ENCODE measurements at regions of chr2 and their contacts with region 1.

Region 1: GRCh38 chr2:73985308-73986084 is 786 bp downstream of the TET3 start:
- DNase-seq: no peak
- ATAC-seq: peak; percentile 16
- H3K4me3 ChIP-seq: peak overlapping the region; percentile 96
- H3K27ac ChIP-seq: peak overlapping the region; percentile 89
- H3K4me1 ChIP-seq: peaks cover 12% of the 10 kb centered on the region
- H3K27me3 ChIP-seq: no peaks in the 10 kb centered on the region
- CTCF ChIP-seq: no peak
- EP300 ChIP-seq: peak; percentile 21 to 47; a peak in 1 of 4 replicates
- POLR2A ChIP-seq: no peak; the same call in 1 of the 2 replicates
- RAD21 ChIP-seq: no peak

Region 2: GRCh38 chr2:73859721-73860586 is 125.5 kb before region 1 on chr2:
- CTCF ChIA-PET with region 1: no interaction called
- POLR2A ChIA-PET with region 1: no interaction called
- RAD21 ChIA-PET with region 1: no interaction called
- SMC1A ChIA-PET with region 1: no interaction called
- in situ Hi-C with region 1: no loop called
- intact Hi-C with region 1: no loop called
- DNase-seq: no peak
- ATAC-seq: 0 out of 3 replicates have a peak, but pooled peaks have one; percentile 24
- H3K4me3 ChIP-seq: no peak overlapping the region
- H3K27ac ChIP-seq: no peak overlapping the region
- H3K4me1 ChIP-seq: no peaks in the 10 kb centered on the region
- H3K27me3 ChIP-seq: no peaks in the 10 kb centered on the region
- CTCF ChIP-seq: no peak
- EP300 ChIP-seq: no peak
- POLR2A ChIP-seq: no peak
- RAD21 ChIP-seq: no peak

Region 3: DNA sequence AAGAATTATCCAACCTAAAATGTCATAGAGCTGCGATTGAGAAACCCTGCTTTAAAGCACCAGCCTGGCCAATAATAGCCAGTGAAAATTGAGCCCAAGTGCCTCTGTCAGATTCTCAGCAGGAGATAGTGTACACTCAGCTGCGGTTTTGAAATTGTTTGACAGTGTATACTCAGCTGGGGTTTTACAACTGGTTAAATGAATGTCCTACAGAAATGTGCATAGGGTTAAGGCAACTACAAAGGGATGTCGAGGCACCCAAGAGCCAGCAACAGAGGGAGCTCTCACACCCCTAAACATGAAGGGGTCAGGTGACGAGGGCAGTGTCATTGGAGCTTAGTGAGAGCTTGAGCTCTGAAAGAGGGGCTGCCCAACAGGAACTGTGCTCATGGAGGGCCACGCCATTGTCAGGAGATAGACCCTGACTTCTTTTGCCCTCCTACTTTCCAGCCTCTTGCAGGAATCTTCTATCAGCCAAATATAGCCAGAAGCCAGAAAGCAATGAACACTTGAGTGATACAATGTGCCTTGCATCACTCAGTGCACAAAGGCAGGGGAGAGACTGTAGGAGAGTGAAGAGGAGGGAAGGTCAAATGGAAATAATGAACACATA is 77.5 kb before region 1 on chr2:
- CTCF ChIA-PET with region 1: interaction called, 78 read pairs
- POLR2A ChIA-PET with region 1: interaction called, 4 read pairs
- RAD21 ChIA-PET with region 1: interaction called, 52 read pairs
- SMC1A ChIA-PET with region 1: interaction called, 30 read pairs
- in situ Hi-C with region 1: no loop called
- intact Hi-C with region 1: no loop called
- DNase-seq: peak; percentile 26
- ATAC-seq: peak; percentile 99
- H3K4me3 ChIP-seq: no peak overlapping the region
- H3K27ac ChIP-seq: no peak overlapping the region
- H3K4me1 ChIP-seq: no peaks in the 10 kb centered on the region
- H3K27me3 ChIP-seq: no peaks in the 10 kb centered on the region
- CTCF ChIP-seq: peak; percentile 58 to 76 (median 62)
- EP300 ChIP-seq: no peak
- POLR2A ChIP-seq: no peak
- RAD21 ChIP-seq: peak; percentile 83

Region 4: DNA sequence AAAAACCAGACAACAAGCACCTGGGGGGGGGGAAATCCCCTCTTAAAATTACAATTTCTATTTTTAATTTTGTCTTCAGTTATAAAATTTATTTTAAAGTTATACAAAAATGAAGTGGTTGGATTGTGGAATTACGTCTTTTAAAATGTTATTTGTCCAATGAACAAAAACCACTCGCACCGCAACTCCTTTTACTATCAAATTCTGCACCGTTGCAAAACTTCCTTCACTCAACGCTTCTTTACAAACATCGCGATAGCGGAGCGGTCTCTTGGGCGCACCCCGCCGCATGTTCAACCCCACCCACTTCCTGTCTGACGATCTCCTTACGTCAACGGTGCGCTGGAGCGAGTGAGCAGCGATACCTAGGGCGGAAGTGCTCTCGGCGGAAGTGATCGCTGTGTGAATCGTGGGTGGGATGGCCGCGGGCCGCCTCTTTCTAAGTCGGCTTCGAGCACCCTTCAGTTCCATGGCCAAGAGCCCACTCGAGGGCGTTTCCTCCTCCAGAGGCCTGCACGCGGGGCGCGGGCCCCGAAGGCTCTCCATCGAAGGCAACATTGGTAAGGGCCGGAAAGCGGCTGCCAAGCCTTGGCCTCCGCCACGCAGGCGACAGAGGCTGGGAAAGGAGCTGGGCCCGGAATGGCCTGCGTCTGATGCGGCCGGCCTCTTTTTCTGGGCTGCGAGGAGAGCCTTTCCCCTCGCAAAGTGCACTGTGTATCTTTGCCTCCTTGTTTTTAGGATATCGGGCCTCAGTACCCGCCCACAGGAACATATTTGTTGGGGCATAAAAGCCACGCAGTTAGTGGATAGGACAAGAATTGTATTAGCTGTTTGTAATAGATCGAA is 58.8 kb before region 1 on chr2 and contains the start of gene DGUOK:
- CTCF ChIA-PET with region 1: interaction called, 20 read pairs
- POLR2A ChIA-PET with region 1: interaction called, 9 read pairs
- RAD21 ChIA-PET with region 1: interaction called, 9 read pairs
- SMC1A ChIA-PET with region 1: interaction called, 19 read pairs
- in situ Hi-C with region 1: no loop called
- intact Hi-C with region 1: loop called (anchors 2 kb)
- DNase-seq: peak; percentile 97
- ATAC-seq: peak; percentile 96
- H3K4me3 ChIP-seq: peak within 1 kb of the TSS; percentile 97
- H3K27ac ChIP-seq: peak within 1 kb of the TSS; percentile 87
- H3K4me1 ChIP-seq: peaks cover 13% of the 10 kb centered on the region
- H3K27me3 ChIP-seq: no peaks in the 10 kb centered on the region
- CTCF ChIP-seq: no peak
- EP300 ChIP-seq: peak; percentile 13 to 25; a peak in 2 of 4 replicates
- POLR2A ChIP-seq: peak; percentile 97
- RAD21 ChIP-seq: no peak
- polyA plus RNA-seq, gene DGUOK: 175 to 234 TPM

Region 5: DNA sequence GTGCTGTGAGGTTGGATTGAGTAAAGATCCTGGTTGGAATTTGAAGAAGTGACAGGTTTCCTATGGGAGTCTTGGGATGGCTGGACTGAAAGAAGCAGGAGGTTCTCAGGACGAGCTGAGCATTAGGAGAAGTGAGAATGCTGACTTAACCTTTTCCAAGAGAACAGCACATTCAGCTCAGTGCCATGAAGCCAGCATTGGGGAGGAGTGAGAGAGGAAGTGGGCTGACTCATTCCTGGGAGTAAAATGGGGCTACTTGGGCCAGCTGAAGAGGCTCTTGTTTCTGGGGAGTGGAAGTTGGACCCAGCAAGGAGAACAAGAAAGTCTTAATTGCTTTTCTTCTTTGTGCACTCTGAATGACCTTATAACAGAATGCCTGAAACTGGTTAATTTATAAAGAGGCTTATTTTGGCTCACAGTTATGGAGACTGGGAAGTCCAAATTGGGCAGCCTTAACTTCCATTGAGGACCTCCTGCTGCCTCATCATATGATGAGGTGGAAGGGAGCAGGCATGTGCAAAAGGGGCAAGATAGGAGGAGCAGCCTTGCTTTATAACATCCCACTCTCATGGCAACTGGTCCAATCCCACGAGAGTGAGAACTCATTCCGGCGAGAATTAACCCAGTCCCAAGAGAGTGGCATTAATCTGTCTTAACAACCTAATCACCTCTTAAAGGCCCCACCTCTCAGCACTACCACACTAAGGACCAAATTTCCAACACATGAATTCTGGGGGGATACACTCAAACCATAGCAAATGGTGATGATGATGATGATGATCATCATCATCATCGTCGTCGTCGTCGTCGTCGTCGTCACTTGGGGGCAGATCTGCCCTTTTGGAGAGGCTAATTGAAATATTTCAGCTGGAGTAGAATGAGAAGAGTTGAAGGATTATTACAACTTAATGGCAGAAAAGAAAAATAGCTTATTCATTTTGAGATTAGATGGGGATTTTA is 32.7 kb before region 1 on chr2:
- CTCF ChIA-PET with region 1: interaction called, 18 read pairs
- POLR2A ChIA-PET with region 1: interaction called, 5 read pairs
- RAD21 ChIA-PET with region 1: interaction called, 4 read pairs
- SMC1A ChIA-PET with region 1: interaction called, 15 read pairs
- in situ Hi-C with region 1: no loop called
- intact Hi-C with region 1: no loop called
- DNase-seq: no peak
- ATAC-seq: no peak
- H3K4me3 ChIP-seq: no peak overlapping the region
- H3K27ac ChIP-seq: peak overlapping the region; percentile 24; the same call in 1 of the 2 replicates
- H3K4me1 ChIP-seq: peaks cover 4% of the 10 kb centered on the region; the same call in 1 of the 2 replicates
- H3K27me3 ChIP-seq: no peaks in the 10 kb centered on the region
- CTCF ChIP-seq: no peak
- EP300 ChIP-seq: no peak
- POLR2A ChIP-seq: no peak
- RAD21 ChIP-seq: no peak

Region 6: GRCh38 chr2:74002487-74003391 is 17.2 kb after region 1 on chr2:
- CTCF ChIA-PET with region 1: interaction called, 18 read pairs
- POLR2A ChIA-PET with region 1: interaction called, 19 read pairs
- RAD21 ChIA-PET with region 1: interaction called, 48 read pairs
- SMC1A ChIA-PET with region 1: interaction called, 18 read pairs
- in situ Hi-C with region 1: no loop called
- intact Hi-C with region 1: no loop called
- DNase-seq: no peak
- ATAC-seq: peak; percentile 96
- H3K4me3 ChIP-seq: peak overlapping the region; percentile 71
- H3K27ac ChIP-seq: peak overlapping the region; percentile 45; the same call in 1 of the 2 replicates
- H3K4me1 ChIP-seq: peaks cover 17% of the 10 kb centered on the region
- H3K27me3 ChIP-seq: no peaks in the 10 kb centered on the region
- CTCF ChIP-seq: no peak
- EP300 ChIP-seq: no peak
- POLR2A ChIP-seq: peak; percentile 63
- RAD21 ChIP-seq: no peak

Region 7: DNA sequence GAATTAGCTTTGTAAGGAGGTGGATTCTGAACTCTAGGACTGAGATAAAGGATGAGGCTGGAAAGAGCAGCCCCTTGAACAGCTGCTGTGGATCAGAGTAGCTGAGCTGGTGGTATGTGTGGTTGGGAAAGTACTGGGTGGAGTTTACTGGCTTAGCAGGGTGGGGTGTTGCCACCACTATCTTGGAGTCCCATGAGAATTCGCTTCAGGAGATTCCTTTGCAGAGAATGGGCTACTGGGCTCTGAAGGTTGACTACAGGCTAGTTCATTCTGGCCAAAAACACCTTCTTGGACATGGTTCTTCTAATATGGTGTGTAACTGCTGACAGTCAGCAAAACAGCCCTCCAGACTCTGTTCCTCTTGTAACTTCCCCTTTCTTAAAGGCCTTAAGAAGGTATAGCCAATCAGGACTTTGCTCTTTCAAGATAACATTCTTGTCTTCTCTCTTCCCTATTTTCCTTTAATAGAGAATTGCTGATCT is 51.9 kb after region 1 on chr2:
- CTCF ChIA-PET with region 1: interaction called, 25 read pairs
- POLR2A ChIA-PET with region 1: interaction called, 34 read pairs
- RAD21 ChIA-PET with region 1: interaction called, 57 read pairs
- SMC1A ChIA-PET with region 1: interaction called, 14 read pairs
- in situ Hi-C with region 1: no loop called
- intact Hi-C with region 1: loop called (anchors 2 kb)
- DNase-seq: peak; percentile 54
- ATAC-seq: peak; percentile 81
- H3K4me3 ChIP-seq: peak overlapping the region; percentile 35; the same call in 1 of the 2 replicates
- H3K27ac ChIP-seq: peak overlapping the region; percentile 64
- H3K4me1 ChIP-seq: peaks cover 69% of the 10 kb centered on the region
- H3K27me3 ChIP-seq: no peaks in the 10 kb centered on the region
- CTCF ChIP-seq: no peak
- EP300 ChIP-seq: 0 out of 4 replicates have a peak, but pooled peaks of 1 of the 2 experiments have one; percentile 7
- POLR2A ChIP-seq: no peak
- RAD21 ChIP-seq: no peak

Region 8: DNA sequence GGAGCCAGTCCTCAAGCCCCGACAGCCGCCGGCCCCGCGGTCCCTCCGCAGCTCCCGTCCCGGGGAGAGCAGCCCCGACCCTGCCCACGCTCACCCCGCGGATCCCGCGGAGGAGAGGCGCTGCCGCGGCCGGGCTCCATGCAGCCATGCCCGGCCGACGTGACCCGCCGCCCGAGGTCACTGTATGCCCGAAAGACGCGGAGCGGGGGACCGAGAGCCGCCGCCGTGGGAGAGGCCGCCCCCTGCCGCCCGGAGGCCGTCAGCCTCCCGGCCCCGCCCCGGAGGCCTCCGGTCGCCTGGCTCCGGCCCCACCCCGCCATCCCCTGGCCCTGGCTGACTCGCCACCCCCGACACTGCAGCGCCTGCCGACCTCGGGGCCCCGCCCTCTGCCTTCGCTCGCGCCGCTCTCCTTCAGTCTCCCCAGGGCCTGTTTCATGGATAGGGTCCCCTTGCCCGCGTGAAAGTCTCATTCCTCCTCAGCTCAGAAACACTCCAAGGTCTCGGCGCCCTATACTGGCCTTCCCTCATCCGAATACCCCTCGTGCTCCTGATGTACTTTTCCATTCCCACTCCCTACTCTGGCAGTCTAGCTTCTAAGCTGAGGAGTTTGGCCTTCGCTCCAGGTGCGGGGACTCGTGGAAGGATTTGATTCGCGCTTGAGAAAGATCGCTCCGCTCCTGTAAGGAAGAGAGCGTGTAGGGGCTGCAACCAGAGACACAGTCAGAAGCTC is 162.4 kb after region 1 on chr2 and contains the start of gene BOLA3:
- CTCF ChIA-PET with region 1: interaction called, 12 read pairs
- POLR2A ChIA-PET with region 1: no interaction called
- RAD21 ChIA-PET with region 1: interaction called, 6 read pairs
- SMC1A ChIA-PET with region 1: interaction called, 8 read pairs
- in situ Hi-C with region 1: no loop called
- intact Hi-C with region 1: no loop called
- DNase-seq: peak; percentile 32
- ATAC-seq: peak; percentile 97
- H3K4me3 ChIP-seq: peak within 1 kb of the TSS; percentile 89
- H3K27ac ChIP-seq: peak within 1 kb of the TSS; percentile 60
- H3K4me1 ChIP-seq: peaks cover 7% of the 10 kb centered on the region
- H3K27me3 ChIP-seq: no peaks in the 10 kb centered on the region
- CTCF ChIP-seq: peak; percentile 66 to 88 (median 67)
- EP300 ChIP-seq: no peak
- POLR2A ChIP-seq: peak; percentile 89
- RAD21 ChIP-seq: peak; percentile 48
- polyA plus RNA-seq, gene BOLA3: 164 to 168 TPM

Measured in GM12878 (cell line).